Activated T-helper 2 cell treated with anti-CD3 and anti-CD28 coated beads, Interferon-gamma antibody, Interleukin-2, Interleukin-4, amounts not matched to agents 10 μg/mL and 5 μg/mL and 100 μg/mL, durations not matched to agents 14 hours and 24 hours and 36 hours (primary cell): ENCODE measurements at regions of chr10 and their contacts with region 1.

Region 1: DNA sequence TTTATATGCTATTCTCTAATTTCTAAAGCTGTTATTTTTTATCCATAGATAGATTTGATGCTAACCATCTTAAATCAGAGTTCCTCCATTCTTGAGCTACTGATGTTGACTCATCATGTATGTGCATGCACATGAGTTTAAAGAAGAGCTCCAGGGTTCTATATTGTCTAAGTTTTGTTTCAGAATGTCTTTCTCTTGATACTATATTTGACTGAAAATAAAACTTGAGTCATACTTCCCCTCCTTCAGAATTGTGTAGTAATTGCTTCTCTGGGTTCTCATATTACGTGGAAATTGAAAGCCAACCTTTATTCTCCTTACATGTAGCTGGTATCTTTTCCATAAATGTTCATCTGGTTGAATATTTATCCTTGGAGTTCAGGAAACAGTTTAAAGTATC is 89.4 kb downstream of the LRRTM3 start:
- DNase-seq: no peak
- H3K4me3 Mint-ChIP-seq: no peak overlapping the region
- H3K27ac Mint-ChIP-seq: peak overlapping the region; percentile 46
- H3K4me1 Mint-ChIP-seq: peaks cover 27% of the 10 kb centered on the region
- H3K27me3 Mint-ChIP-seq: no peaks in the 10 kb centered on the region

Region 2: DNA sequence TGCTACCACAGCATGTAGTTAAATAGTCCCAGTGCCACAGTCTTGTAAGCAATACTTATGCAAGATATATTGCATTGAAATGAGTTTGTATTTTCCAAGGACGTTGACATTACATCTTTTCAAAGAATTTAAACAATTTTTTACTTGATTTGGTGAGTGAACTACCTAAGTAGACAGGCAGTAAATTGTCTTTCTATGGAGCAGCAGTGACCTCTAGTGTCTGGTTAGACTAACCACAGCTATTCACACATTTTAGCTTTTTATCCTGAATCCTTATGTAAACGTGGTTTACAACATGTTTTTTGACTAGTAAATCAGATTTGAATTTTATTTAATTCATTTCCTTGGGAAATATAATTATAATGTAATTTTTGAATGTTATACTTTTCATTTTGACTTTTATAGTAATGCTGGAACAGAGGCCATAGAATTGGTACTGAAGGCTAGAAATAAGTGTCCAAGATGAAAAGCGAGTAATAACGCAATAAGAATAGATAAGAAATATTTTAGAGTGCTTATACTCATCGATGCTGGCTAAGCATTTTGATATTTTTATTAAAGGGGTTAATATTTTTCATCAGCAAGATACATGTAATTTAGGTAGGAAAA is 83.8 kb before region 1 on chr10:
- intact Hi-C with region 1: loop called (anchors 10 kb)
- DNase-seq: no peak
- H3K4me3 Mint-ChIP-seq: no peak overlapping the region
- H3K27ac Mint-ChIP-seq: no peak overlapping the region
- H3K4me1 Mint-ChIP-seq: no peaks in the 10 kb centered on the region
- H3K27me3 Mint-ChIP-seq: peaks cover 31% of the 10 kb centered on the region

Region 3: DNA sequence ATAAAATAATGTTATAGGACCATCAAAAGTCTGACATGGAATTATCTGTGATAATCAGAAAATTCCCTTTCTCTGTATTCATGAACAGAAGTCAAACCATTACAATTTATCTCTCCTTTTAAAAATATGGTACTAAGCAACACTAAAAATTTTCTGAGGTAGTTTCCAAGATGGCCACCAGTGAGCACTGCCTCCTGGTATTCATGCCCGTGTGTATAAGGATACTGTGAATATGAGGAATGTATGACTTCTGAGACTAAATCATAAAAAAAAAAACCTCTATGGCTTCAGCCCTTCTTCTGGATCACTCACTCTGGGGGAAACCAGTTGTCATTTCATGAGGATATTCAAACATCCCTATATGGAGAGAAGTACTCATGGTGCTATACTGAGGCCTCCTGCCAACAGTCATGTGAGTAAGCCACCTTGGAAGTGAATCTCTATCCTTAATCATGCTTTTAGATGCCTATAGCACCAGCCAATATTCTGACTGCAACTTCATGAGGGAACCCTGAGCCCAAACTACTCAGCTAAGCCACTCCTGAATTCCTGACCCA is 910.3 kb after region 1 on chr10:
- intact Hi-C with region 1: no loop called
- DNase-seq: no peak
- H3K4me3 Mint-ChIP-seq: no peak overlapping the region
- H3K27ac Mint-ChIP-seq: no peak overlapping the region
- H3K4me1 Mint-ChIP-seq: no peaks in the 10 kb centered on the region
- H3K27me3 Mint-ChIP-seq: no peaks in the 10 kb centered on the region